ENCODE measurements at regions of chr5 and their contacts with region 1.

Region 1: DNA sequence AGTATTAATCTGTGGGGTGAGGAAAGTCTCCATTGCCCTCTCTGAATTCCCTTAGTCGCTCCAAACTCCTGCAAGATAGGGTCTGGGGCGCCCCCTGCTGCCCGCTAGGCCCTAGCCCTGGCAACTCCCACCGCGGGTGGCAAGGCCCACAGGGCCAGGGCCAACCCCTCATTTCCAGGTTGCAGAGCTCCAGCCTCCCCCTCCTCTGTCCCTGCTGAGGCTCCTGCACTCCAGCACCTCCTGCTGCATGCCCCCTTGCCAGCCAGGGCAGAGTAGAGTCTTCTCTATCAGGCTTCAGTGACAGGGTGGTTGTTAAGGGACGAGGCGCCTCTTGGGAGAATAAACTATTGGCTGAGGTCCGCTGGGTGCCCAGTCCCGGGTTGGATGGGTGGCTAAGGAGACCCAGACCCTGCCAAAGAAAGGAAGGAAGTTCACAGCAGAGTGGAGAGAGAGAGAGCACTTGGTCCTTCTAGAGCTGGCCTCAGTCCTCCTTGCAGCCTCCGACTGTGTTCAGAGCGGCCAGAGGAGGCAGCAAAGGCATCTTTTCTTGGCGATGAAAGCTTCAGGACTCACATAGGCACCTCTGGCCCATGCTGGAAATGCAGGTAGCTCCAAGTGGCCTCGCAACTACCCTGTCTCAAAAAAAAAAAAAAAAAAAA is 45.6 kb downstream of the SAR1B start:
- DNase-seq: peak; percentile 95
- ATAC-seq: peak; percentile 91
- H3K4me3 Mint-ChIP-seq: no peak overlapping the region
- H3K27ac Mint-ChIP-seq: peak overlapping the region; percentile 78
- H3K4me1 Mint-ChIP-seq: peaks cover 14% of the 10 kb centered on the region
- H3K27me3 Mint-ChIP-seq: no peaks in the 10 kb centered on the region

Region 2: GRCh38 chr5:133910571-133910970 is 676.4 kb before region 1 on chr5:
- CTCF ChIA-PET with region 1: no interaction called
- POLR2A ChIA-PET with region 1: no interaction called
- intact Hi-C with region 1: no loop called
- DNase-seq: no peak
- ATAC-seq: no peak
- H3K4me3 Mint-ChIP-seq: no peak overlapping the region
- H3K27ac Mint-ChIP-seq: no peak overlapping the region
- H3K4me1 Mint-ChIP-seq: no peaks in the 10 kb centered on the region
- H3K27me3 Mint-ChIP-seq: no peaks in the 10 kb centered on the region

Region 3: GRCh38 chr5:134176511-134177368 is 410.3 kb before region 1 on chr5 and contains the start of gene SKP1:
- CTCF ChIA-PET with region 1: interaction called, 4 read pairs
- POLR2A ChIA-PET with region 1: no interaction called
- intact Hi-C with region 1: loop called in 1 of 2 experiments (anchors 2 kb)
- DNase-seq: peak; percentile 91
- ATAC-seq: peak; percentile 85
- H3K4me3 Mint-ChIP-seq: peak within 1 kb of the TSS; percentile 98
- H3K27ac Mint-ChIP-seq: peak within 1 kb of the TSS; percentile 95
- H3K4me1 Mint-ChIP-seq: peaks cover 32% of the 10 kb centered on the region
- H3K27me3 Mint-ChIP-seq: no peaks in the 10 kb centered on the region
- total RNA-seq, gene SKP1: 218 to 265 TPM

Region 4: GRCh38 chr5:134304311-134304710 is 282.7 kb before region 1 on chr5:
- CTCF ChIA-PET with region 1: interaction called, 29 read pairs
- POLR2A ChIA-PET with region 1: no interaction called
- intact Hi-C with region 1: loop called (anchors 1 kb)
- DNase-seq: no peak
- ATAC-seq: no peak
- H3K4me3 Mint-ChIP-seq: no peak overlapping the region
- H3K27ac Mint-ChIP-seq: no peak overlapping the region
- H3K4me1 Mint-ChIP-seq: no peaks in the 10 kb centered on the region
- H3K27me3 Mint-ChIP-seq: no peaks in the 10 kb centered on the region

Region 5: DNA sequence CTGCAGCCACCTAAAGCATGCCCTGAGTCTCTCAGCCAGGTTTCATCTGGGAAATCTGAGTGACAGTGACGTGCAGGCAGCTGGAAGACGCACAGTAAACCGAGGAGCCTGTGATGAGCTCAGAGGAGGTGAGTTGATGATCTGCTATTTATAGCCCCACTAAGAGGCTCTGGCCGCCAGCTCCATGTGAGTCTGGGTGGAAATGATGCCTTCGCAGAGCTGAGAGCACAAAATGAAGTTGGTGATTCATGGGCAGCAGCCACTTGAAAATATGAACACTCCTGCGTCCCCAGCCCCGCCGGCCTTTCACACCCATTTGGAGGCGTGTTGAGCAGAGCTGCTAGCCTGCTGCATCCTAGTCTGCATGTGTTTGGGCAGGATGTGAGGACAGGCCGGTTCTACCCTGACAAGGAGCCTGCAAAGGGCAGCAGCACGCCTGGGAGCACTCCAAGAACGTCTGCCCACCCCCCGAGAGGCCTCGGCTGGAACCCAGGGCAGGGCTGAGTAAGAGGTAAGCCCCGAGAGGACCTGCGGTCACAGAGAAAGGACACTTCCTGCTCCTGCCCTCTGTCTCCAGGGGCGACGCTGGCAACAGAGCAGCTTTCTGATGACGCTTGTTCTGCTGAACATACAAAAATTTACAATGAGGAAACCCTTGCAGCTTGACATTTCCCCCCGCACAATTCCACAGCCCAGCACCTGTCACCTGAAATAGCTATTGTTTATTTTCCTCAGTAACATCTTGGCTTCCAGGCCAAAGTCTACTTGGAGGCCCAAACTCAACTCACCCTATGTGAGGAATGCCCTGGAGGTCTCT is 150.3 kb before region 1 on chr5:
- CTCF ChIA-PET with region 1: interaction called, 10 read pairs
- POLR2A ChIA-PET with region 1: no interaction called
- intact Hi-C with region 1: no loop called
- DNase-seq: peak; percentile 78
- ATAC-seq: peak; percentile 80
- H3K4me3 Mint-ChIP-seq: no peak overlapping the region
- H3K27ac Mint-ChIP-seq: peak overlapping the region; percentile 32
- H3K4me1 Mint-ChIP-seq: peaks cover 35% of the 10 kb centered on the region
- H3K27me3 Mint-ChIP-seq: no peaks in the 10 kb centered on the region

Region 6: DNA sequence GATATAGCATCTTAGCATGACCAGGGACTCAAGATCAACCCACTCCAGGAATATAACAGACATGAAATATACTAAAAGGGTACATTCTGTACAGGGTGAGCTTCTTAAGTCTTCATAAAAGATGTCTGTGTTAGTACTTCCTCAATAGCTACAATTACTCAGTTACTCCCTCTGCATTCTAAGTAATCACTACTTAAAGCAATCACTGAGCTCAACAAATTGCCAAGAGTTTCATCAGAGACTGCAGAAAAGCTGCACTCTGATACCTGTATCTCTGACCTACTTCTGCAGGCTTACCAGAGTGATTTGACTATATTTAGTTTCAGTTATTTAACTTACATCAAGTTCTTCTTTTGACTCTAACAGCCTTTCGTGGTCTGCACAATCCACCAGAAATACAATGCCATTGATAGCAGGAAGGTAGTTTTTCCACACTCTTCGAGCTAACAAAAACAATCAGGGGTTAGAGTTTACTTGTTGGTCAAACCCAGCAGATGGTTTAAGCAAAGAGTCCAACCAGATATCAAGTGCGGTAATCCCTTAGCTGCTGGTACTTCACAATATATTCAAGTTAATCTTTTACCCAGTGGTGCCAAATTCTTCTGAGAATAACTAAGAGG is 22.3 kb after region 1 on chr5:
- CTCF ChIA-PET with region 1: interaction called, 23 read pairs
- POLR2A ChIA-PET with region 1: interaction called, 4 read pairs
- intact Hi-C with region 1: no loop called
- DNase-seq: peak; percentile 29
- ATAC-seq: peak; percentile 75
- H3K4me3 Mint-ChIP-seq: peak overlapping the region; percentile 13
- H3K27ac Mint-ChIP-seq: peak overlapping the region; percentile 94
- H3K4me1 Mint-ChIP-seq: peaks cover 42% of the 10 kb centered on the region
- H3K27me3 Mint-ChIP-seq: no peaks in the 10 kb centered on the region

Region 7: DNA sequence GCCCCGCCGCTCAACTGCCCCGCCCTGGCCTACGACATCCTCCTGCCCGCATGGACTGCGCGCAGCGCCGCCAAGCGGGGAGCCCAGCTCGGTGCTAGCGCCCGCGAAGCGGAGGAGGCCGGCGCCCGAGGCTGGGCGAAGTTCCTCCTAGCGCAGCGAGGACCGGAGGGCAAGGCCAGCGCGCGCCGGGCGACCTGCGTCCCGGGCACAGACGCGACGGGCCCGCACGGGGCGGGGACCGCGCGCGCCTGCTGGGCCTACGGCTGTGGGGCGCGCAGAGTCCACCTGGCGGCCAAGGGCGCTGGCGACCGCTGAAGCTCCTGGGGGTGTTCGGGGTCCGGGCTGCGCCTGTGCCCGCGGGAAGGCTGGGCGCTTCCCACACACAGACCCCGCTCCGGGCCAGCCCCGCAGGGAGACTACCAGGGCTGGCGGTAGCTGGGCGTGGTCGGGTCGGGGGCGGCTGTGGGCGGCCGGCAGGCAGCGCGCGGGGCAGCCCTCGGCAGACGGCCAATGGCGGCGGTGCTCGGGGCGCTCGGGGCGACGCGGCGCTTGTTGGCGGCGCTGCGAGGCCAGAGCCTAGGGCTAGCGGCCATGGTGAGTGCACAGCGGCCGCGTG is 317.7 kb after region 1 on chr5 and contains the start of gene PCBD2:
- CTCF ChIA-PET with region 1: interaction called, 5 read pairs
- POLR2A ChIA-PET with region 1: no interaction called
- intact Hi-C with region 1: loop called in 1 of 2 experiments (anchors 1 kb)
- DNase-seq: peak; percentile 97
- ATAC-seq: peak; percentile 89
- H3K4me3 Mint-ChIP-seq: peak within 1 kb of the TSS; percentile 95
- H3K27ac Mint-ChIP-seq: peak within 1 kb of the TSS; percentile 98
- H3K4me1 Mint-ChIP-seq: peaks cover 17% of the 10 kb centered on the region
- H3K27me3 Mint-ChIP-seq: no peaks in the 10 kb centered on the region
- total RNA-seq, gene PCBD2: 10.0 to 12.8 TPM

Measured in activated CD4-positive, alpha-beta T cell treated with anti-CD3 and anti-CD28 coated beads for 36 hours (primary cell).